Transverse colon (tissue), 4 donors: ENCODE measurements at regions of chr10 and their contacts with region 1.

Region 1: GRCh38 chr10:7872041-7872442 is 53.7 kb downstream of the TAF3 start:
- DNase-seq: no peak
- H3K4me3 ChIP-seq: peak overlapping the region in 1 of 4 donors; percentile 43
- H3K27ac ChIP-seq: no peak overlapping the region
- H3K4me1 ChIP-seq: peaks cover 0 to 5% (median 2%) of the 10 kb centered on the region in 4 donors
- H3K27me3 ChIP-seq: no peaks in the 10 kb centered on the region
- CTCF ChIP-seq: peak; percentile 73 to 84 (median 76)
- EP300 ChIP-seq: no peak
- POLR2A ChIP-seq: no peak

Region 2: GRCh38 chr10:9209105-9209798 is 1337.2 kb after region 1 on chr10:
- in situ Hi-C with region 1: loop called (anchors 10 to 25 kb)
- intact Hi-C with region 1: loop called (anchors 5 kb)
- DNase-seq: peak; percentile 53
- H3K4me3 ChIP-seq: no peak overlapping the region
- H3K27ac ChIP-seq: no peak overlapping the region
- H3K4me1 ChIP-seq: no peaks in the 10 kb centered on the region
- H3K27me3 ChIP-seq: peaks cover 5% of the 10 kb centered on the region
- CTCF ChIP-seq: peak; percentile 80 to 92 (median 88)
- EP300 ChIP-seq: no peak
- POLR2A ChIP-seq: no peak

Region 3: DNA sequence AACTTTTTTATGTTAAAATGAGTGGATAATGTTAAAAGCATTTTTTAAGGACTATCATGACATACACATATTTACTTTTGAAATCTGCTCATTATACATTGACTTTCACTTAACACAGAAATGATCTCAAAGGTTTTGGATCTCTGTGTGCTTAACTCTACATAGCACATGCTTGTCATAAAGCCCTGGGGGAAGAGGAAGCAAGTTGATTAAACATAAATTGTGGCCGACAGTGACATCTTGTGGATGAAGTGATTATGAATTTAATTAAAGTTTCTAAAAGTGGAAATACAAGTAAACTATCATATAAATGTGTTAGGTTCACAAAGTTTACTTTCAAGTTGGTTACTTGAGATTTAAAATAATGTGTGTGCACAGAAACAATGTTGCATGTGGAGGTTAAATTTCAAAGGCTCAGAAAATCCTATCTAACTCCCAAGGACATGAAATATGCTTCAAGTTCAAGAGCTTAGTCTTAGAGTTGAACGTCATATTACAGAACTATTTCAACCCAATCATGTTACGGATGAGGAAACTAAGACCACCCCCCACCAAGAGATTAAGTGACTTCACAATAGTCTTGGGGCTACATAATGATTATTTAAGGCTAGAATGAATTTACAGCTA is 1430.2 kb after region 1 on chr10:
- in situ Hi-C with region 1: loop called in 1 of 4 experiments (anchors 25 kb)
- intact Hi-C with region 1: no loop called
- DNase-seq: no peak
- H3K4me3 ChIP-seq: no peak overlapping the region
- H3K27ac ChIP-seq: no peak overlapping the region
- H3K4me1 ChIP-seq: no peaks in the 10 kb centered on the region
- H3K27me3 ChIP-seq: no peaks in the 10 kb centered on the region
- CTCF ChIP-seq: peak in 4 of 5 experiments; percentile 28 to 51 (median 35)
- EP300 ChIP-seq: no peak
- POLR2A ChIP-seq: no peak